Activated T-helper 2 cell treated with anti-CD3 and anti-CD28 coated beads, Interferon-gamma antibody, Interleukin-2, Interleukin-4, amounts not matched to agents 10 μg/mL and 5 μg/mL and 100 μg/mL, durations not matched to agents 14 hours and 24 hours and 36 hours (primary cell): ENCODE measurements at regions of chr11 and their contacts with region 1.

Region 1: DNA sequence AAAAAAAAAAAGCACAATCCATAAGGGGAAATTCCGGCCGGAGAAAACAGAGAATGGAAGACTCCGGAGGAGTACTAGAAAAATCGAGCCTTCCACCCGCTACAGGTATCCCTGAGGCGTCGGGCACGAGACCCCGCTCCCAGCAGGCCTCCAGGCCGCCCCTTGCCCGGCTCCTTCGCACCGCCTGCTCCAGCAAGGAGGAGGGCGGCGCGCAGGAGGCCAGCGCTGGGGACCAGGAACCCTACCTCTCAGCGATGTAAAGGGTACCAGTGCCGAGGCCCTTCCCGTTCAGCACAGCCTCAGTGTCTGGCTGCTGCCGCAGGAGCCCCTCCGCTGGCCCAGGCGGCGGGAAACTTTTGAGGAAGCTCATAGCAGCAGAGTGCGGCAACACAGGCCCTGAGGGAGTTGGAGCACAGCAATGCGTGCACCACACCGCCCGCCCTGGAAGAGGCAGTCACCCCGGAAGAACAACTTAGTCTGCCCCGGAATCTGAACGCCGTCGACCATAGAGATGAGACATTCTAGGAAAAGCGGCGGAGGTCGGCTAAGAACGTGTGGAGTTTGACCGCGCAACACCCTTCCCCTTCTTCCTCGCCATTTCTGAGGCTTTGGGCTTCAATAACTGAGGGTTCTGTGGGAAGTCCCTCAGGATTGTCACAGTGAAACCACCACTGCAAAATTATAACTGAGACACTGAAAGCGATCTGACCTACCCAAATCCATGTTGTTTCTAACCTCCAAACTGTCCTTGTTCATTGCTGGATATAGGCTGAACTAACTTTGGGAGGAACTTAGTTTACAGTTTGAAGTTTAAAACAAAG is at the start of gene CLNS1A:
- DNase-seq: peak; percentile 76
- H3K4me3 Mint-ChIP-seq: peak within 1 kb of the TSS; percentile 90
- H3K27ac Mint-ChIP-seq: peak within 1 kb of the TSS; percentile 91
- H3K4me1 Mint-ChIP-seq: peaks cover 27% of the 10 kb centered on the region
- H3K27me3 Mint-ChIP-seq: no peaks in the 10 kb centered on the region
- total RNA-seq, gene CLNS1A: 153 and 157 TPM in 2 replicates

Region 2: DNA sequence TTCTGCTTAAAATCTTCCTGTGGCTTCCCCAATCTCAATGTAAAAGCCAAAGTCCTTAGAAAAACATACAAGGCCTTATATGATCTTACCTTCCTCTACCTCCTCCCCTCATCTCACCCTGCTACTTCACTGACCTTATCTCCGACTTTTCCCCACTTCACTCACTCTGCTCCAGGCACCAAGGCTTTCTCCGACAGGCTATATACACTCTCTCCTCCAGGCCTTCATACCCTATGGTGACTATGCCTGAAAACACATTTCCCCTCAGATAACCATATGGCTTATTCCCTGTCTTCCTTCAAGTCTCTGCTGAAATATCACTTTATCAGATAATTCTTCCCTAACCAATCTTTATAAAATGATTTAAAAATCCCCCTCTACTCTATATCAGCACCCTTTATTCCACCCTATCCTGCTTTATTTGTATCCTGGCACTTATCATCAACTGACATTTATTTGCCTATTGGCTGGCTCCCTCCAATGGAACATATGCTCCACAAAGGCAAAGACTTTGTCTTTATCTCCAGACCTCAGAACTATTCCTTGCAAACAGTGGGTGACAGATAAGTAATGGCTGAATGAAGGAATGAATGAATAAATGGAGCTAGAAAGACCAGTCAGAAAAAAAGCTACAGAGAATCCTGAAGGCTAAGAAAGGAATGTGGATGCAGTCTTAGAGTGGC is 216.4 kb before region 1 on chr11:
- intact Hi-C with region 1: no loop called
- DNase-seq: no peak
- H3K4me3 Mint-ChIP-seq: no peak overlapping the region
- H3K27ac Mint-ChIP-seq: no peak overlapping the region
- H3K4me1 Mint-ChIP-seq: peaks cover 12% of the 10 kb centered on the region
- H3K27me3 Mint-ChIP-seq: peaks cover 8% of the 10 kb centered on the region

Region 3: GRCh38 chr11:77705195-77705876 is 67.8 kb after region 1 on chr11:
- intact Hi-C with region 1: loop called (anchors 5 kb)
- DNase-seq: no peak
- H3K4me3 Mint-ChIP-seq: no peak overlapping the region
- H3K27ac Mint-ChIP-seq: peak overlapping the region; percentile 59
- H3K4me1 Mint-ChIP-seq: peaks cover 25% of the 10 kb centered on the region
- H3K27me3 Mint-ChIP-seq: no peaks in the 10 kb centered on the region